ENCODE measurements at regions of chr2 and their contacts with region 1.

Region 1: DNA sequence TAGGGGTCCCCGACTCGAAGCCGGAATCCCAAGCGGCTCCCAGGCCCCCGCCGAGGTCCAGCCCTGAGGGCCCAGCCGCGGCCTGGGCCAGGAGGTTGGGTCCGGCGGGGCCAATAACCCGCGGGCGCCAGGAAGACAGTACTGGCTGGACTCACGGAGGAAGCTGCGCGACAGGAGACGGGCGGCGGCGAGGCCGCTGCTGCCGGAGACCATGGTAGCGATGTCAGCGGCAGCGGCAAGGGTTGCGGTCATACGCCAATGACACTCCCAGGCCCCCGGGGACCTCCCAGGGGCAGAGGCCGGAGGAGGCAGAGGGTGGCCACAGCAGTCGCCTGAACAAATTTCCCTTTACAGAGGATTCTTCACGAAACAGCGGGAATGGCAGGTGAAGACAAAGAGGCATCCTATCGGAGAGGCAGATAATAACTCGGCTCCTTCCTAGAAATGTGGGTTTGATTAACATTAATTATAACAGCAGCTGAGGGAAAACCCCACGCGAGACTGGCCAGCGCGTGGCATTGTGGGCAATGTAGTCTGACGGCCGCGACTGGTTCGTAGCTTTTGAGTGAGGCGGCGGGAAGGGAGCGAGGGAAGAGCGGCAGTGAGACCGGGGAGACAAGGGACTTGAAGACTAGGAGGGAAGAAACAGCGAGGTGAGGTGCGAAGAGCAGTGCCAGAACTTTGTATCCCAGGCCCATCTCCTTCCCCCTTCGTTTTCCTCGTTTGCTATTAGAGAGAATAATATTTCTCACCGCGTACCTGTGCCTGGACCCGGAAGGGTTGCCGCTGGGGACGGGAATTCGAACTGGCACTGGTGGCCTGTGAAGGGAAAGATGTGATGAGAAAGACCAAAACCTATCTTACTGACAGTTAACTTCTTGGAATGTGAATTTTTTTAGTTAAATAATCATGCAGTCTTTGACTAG is at the start of gene SUCLG1:
- DNase-seq: peak; percentile 72 to 94 (median 87)
- ATAC-seq: peak; percentile 96
- H3K4me3 ChIP-seq: peak within 1 kb of the TSS; percentile 81 to 95
- H3K4me3 Mint-ChIP-seq: peak within 1 kb of the TSS; percentile 98
- H3K27ac ChIP-seq: peak within 1 kb of the TSS; percentile 78 to 97
- H3K27ac Mint-ChIP-seq: peak within 1 kb of the TSS; percentile 98
- H3K4me1 ChIP-seq: peaks cover 30% of the 10 kb centered on the region
- H3K4me1 Mint-ChIP-seq: peaks cover 46% of the 10 kb centered on the region
- H3K27me3 ChIP-seq: no peaks in the 10 kb centered on the region
- H3K27me3 Mint-ChIP-seq: no peaks in the 10 kb centered on the region
- CTCF ChIP-seq: no peak
- total RNA-seq, gene SUCLG1: 31.6 to 35.1 TPM

Region 2: GRCh38 chr2:84516234-84516986 is 57.1 kb after region 1 on chr2 and contains the start of gene DNAH6:
- CTCF ChIA-PET with region 1: no interaction called
- POLR2A ChIA-PET with region 1: no interaction called
- intact Hi-C with region 1: loop called (anchors 1 to 5 kb)
- DNase-seq: peak; percentile 71 to 95 (median 85)
- ATAC-seq: peak; percentile 98
- H3K4me3 ChIP-seq: peak within 1 kb of the TSS; percentile 45 to 49
- H3K4me3 Mint-ChIP-seq: peak within 1 kb of the TSS; percentile 89
- H3K27ac ChIP-seq: peak within 1 kb of the TSS; percentile 56 to 74
- H3K27ac Mint-ChIP-seq: peak within 1 kb of the TSS; percentile 85
- H3K4me1 ChIP-seq: peaks cover 9% of the 10 kb centered on the region
- H3K4me1 Mint-ChIP-seq: peaks cover 18% of the 10 kb centered on the region
- H3K27me3 ChIP-seq: no peaks in the 10 kb centered on the region
- H3K27me3 Mint-ChIP-seq: no peaks in the 10 kb centered on the region
- CTCF ChIP-seq: no peak
- total RNA-seq, gene DNAH6: 0.30 to 0.61 TPM

Measured in CD8-positive, alpha-beta T cell (primary cell).